Calu3 (cell line): ENCODE measurements at regions of chr18 and their contacts with region 1.

Region 1: GRCh38 chr18:75314115-75314514 is 103.5 kb downstream of the TSHZ1 start:
- DNase-seq: no peak
- H3K4me3 Mint-ChIP-seq: no peak overlapping the region
- H3K27ac Mint-ChIP-seq: no peak overlapping the region
- H3K4me1 Mint-ChIP-seq: no peaks in the 10 kb centered on the region
- H3K27me3 Mint-ChIP-seq: no peaks in the 10 kb centered on the region
- CTCF ChIP-seq: no peak

Region 2: GRCh38 chr18:77160515-77160914 is 1846.4 kb after region 1 on chr18:
- CTCF ChIA-PET with region 1: interaction called, 11 read pairs
- intact Hi-C with region 1: no loop called
- DNase-seq: no peak
- H3K4me3 Mint-ChIP-seq: no peak overlapping the region
- H3K27ac Mint-ChIP-seq: no peak overlapping the region
- H3K4me1 Mint-ChIP-seq: no peaks in the 10 kb centered on the region
- H3K27me3 Mint-ChIP-seq: peaks cover 61% of the 10 kb centered on the region
- CTCF ChIP-seq: no peak